ENCODE measurements at regions of chr1 and their contacts with region 1.

Region 1: DNA sequence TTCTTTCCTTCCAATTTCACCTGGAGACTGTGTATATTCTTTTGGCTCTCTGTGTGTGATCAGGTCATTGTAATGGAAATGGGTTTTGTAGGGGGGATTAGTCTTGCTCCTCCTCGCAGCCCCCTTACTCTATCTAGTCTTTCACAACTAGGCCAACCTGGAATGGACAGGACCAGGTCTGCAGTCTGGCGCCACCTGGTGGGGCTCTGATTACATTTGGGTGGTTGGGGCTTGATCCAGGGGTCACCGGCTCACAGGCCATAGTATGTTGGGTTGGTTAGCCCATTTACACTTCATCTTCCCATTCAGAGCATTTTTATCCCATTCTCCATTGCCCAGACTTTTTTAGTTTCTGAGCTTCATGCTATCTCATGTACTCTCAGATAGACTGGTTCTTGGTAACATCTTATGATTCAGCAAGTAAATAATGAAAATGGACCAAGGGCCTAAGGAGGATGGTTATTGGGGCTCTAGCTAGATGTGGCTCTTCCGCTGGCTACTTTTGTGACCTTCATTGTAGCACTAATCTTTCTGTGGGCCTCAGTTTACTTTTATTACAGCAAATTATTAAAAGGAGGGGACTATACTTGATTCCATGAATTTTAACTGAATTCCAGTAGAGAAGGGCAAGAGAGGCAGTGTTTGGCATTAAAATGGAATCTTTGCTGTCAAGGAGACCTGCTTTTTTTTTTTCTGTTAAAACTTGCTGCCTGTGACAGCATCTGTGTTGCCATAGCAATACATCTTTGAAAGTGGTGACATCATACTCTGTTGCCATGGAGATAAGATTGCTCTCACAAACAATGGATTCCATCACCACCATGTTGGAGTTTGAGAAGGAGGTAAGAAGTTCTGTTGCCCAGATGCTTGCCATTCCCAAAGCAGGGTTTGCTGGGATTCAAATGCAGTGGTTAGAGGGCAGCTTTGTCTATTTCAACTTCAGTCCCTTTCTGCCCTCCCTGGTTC is 150.1 kb downstream of the PLXNA2 start:
- H3K4me3 Mint-ChIP-seq: no peak overlapping the region
- H3K27ac Mint-ChIP-seq: no peak overlapping the region
- H3K4me1 Mint-ChIP-seq: peaks cover 21% of the 10 kb centered on the region
- H3K27me3 Mint-ChIP-seq: peaks cover 1% of the 10 kb centered on the region

Region 2: GRCh38 chr1:208025031-208025430 is 69.0 kb before region 1 on chr1:
- intact Hi-C with region 1: loop called (anchors 1 kb)
- H3K4me3 Mint-ChIP-seq: no peak overlapping the region
- H3K27ac Mint-ChIP-seq: no peak overlapping the region
- H3K4me1 Mint-ChIP-seq: peaks cover 14% of the 10 kb centered on the region
- H3K27me3 Mint-ChIP-seq: peaks cover 30% of the 10 kb centered on the region

Region 3: GRCh38 chr1:208036109-208036808 is 57.8 kb before region 1 on chr1:
- intact Hi-C with region 1: loop called (anchors 1 kb)
- H3K4me3 Mint-ChIP-seq: no peak overlapping the region
- H3K27ac Mint-ChIP-seq: no peak overlapping the region
- H3K4me1 Mint-ChIP-seq: no peaks in the 10 kb centered on the region
- H3K27me3 Mint-ChIP-seq: peaks cover 6% of the 10 kb centered on the region

Region 4: GRCh38 chr1:208127792-208128529 is 33.9 kb after region 1 on chr1:
- intact Hi-C with region 1: no loop called
- H3K4me3 Mint-ChIP-seq: no peak overlapping the region
- H3K27ac Mint-ChIP-seq: no peak overlapping the region
- H3K4me1 Mint-ChIP-seq: peaks cover 6% of the 10 kb centered on the region
- H3K27me3 Mint-ChIP-seq: peaks cover 26% of the 10 kb centered on the region

Region 5: GRCh38 chr1:208177656-208178055 is 83.6 kb after region 1 on chr1:
- intact Hi-C with region 1: no loop called
- H3K4me3 Mint-ChIP-seq: no peak overlapping the region
- H3K27ac Mint-ChIP-seq: no peak overlapping the region
- H3K4me1 Mint-ChIP-seq: no peaks in the 10 kb centered on the region
- H3K27me3 Mint-ChIP-seq: peaks cover 1% of the 10 kb centered on the region

Region 6: GRCh38 chr1:208245185-208245705 is 151.2 kb after region 1 on chr1:
- intact Hi-C with region 1: loop called (anchors 2 kb)
- H3K4me3 Mint-ChIP-seq: peak overlapping the region; percentile 98
- H3K27ac Mint-ChIP-seq: peak overlapping the region; percentile 89
- H3K4me1 Mint-ChIP-seq: peaks cover 39% of the 10 kb centered on the region
- H3K27me3 Mint-ChIP-seq: peaks cover 50% of the 10 kb centered on the region

Measured in dendritic cell treated with granulocyte-macrophage colony-stimulating factor and Interleukin-4, amounts not matched to agents 40 ng/mL and 50 ng/mL, for 4 days (primary cell).